Heart left ventricle (tissue), 16 donors: ENCODE measurements at regions of chr7 and their contacts with region 1.

Region 1: GRCh38 chr7:149125863-149126661 is at the start of gene ZNF425:
- DNase-seq: peak; percentile 93 to 96 (median 94)
- ATAC-seq: peak; percentile 91 to 96 (median 94)
- H3K4me3 ChIP-seq: peak within 1 kb of the TSS; percentile 70 to 99 (median 84)
- H3K27ac ChIP-seq: peak within 1 kb of the TSS; percentile 94 to 99 (median 96)
- H3K4me1 ChIP-seq: peaks cover 0 to 21% (median 10%) of the 10 kb centered on the region in 12 donors
- H3K27me3 ChIP-seq: no peaks in the 10 kb centered on the region
- CTCF ChIP-seq: peak; percentile 93 to 99 (median 95)
- POLR2A ChIP-seq: peak in 1 of 2 donors; percentile 89
- total RNA-seq, gene ZNF425: 0.21 to 1.6 (median 0.92) TPM

Region 2: GRCh38 chr7:149090397-149091195 is 35.5 kb before region 1 on chr7 and contains the start of gene ZNF786:
- intact Hi-C with region 1: loop called in 3 of 10 experiments (anchors 1 to 5 kb)
- DNase-seq: peak; percentile 91 to 95 (median 92)
- ATAC-seq: peak; percentile 93 to 98 (median 96)
- H3K4me3 ChIP-seq: peak within 1 kb of the TSS; percentile 68 to 99 (median 88)
- H3K27ac ChIP-seq: peak within 1 kb of the TSS; percentile 94 to 100 (median 98)
- H3K4me1 ChIP-seq: peaks cover 0 to 30% (median 11%) of the 10 kb centered on the region in 12 donors
- H3K27me3 ChIP-seq: no peaks in the 10 kb centered on the region
- CTCF ChIP-seq: peak; percentile 82 to 96 (median 95)
- POLR2A ChIP-seq: peak in 1 of 2 donors; percentile 84
- total RNA-seq, gene ZNF786: 2.2 to 5.3 (median 3.0) TPM

Region 3: DNA sequence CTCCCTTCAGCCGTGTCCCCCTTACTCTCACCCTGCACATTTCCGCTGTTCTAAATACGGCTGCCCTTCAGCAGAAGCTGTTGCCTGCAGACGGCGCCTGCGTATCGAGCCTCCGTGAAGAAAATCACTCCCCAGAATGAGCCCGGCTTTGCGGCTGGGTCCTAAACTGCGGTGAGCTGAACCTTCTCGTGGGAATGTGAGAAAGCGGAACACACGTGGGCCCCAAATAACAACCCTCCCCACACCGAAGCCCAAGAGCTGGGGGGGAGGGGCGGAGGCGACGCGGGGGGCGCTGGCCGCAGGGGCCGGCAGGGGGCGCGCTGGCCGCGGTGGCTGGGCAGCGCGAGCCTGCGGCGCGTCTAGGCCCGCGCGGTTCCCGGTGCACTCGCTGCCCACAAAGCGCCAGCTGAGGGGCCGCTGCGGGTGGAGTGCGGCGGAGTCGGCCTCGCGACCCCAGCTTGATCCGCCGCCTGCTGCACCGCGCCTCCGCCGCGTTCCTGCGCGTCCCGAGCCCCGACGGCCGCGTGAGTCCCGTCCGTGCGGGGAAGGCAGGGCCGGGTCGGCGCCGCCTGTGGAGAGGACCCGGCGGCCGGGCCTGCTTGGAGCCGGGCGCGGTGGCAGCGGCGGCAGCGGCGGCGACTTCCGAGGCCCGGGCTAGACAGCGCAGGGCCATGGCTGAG is 21.1 kb after region 1 on chr7 and contains the start of gene ZNF398:
- intact Hi-C with region 1: loop called in 5 of 10 experiments (anchors 1 to 2 kb)
- DNase-seq: peak; percentile 78 to 90 (median 80)
- ATAC-seq: peak; percentile 67 to 94 (median 90)
- H3K4me3 ChIP-seq: peak within 1 kb of the TSS; percentile 70 to 98 (median 86)
- H3K27ac ChIP-seq: peak within 1 kb of the TSS; percentile 62 to 95 (median 89)
- H3K4me1 ChIP-seq: peaks cover 0 to 28% (median 13%) of the 10 kb centered on the region in 12 donors
- H3K27me3 ChIP-seq: no peaks in the 10 kb centered on the region
- CTCF ChIP-seq: peak; percentile 18 to 98 (median 84)
- POLR2A ChIP-seq: no peak
- total RNA-seq, gene ZNF398: 6.5 to 14.4 (median 8.9) TPM